Heart right ventricle (tissue), 16 donors: ENCODE measurements at regions of chr11 and their contacts with region 1.

Region 1: GRCh38 chr11:65988791-65989592 is 13.0 kb downstream of the EIF1AD start:
- DNase-seq: peak; percentile 56 to 93
- ATAC-seq: peak; percentile 96 to 99 (median 98)
- H3K4me3 ChIP-seq: no peak overlapping the region
- H3K27ac ChIP-seq: no peak overlapping the region
- H3K4me1 ChIP-seq: peaks cover 0 to 10% (median 0%) of the 10 kb centered on the region in 9 donors
- H3K27me3 ChIP-seq: no peaks in the 10 kb centered on the region
- CTCF ChIP-seq: peak; percentile 77 to 99 (median 91)

Region 2: GRCh38 chr11:65637794-65638317 is 351.1 kb before region 1 on chr11 and contains the start of gene SIPA1:
- intact Hi-C with region 1: loop called in 1 of 10 experiments (anchors 10 kb)
- DNase-seq: peak; percentile 83 to 85
- ATAC-seq: peak; percentile 79 to 87 (median 82)
- H3K4me3 ChIP-seq: peak within 1 kb of the TSS; percentile 74 to 90 (median 82)
- H3K27ac ChIP-seq: peak within 1 kb of the TSS; percentile 94 to 99 (median 96)
- H3K4me1 ChIP-seq: peaks cover 21 to 56% (median 50%) of the 10 kb centered on the region in 9 donors
- H3K27me3 ChIP-seq: no peaks in the 10 kb centered on the region
- CTCF ChIP-seq: peak; percentile 13 to 68 (median 52)
- total RNA-seq, gene SIPA1: 11.8 to 39.7 (median 15.6) TPM

Region 3: GRCh38 chr11:65711785-65712632 is 277.0 kb before region 1 on chr11 and contains the start of gene KAT5:
- intact Hi-C with region 1: loop called in 3 of 10 experiments (anchors 5 kb)
- DNase-seq: peak; percentile 98
- ATAC-seq: peak; percentile 92 to 96 (median 95)
- H3K4me3 ChIP-seq: peak within 1 kb of the TSS; percentile 39 to 82 (median 68)
- H3K27ac ChIP-seq: peak within 1 kb of the TSS; percentile 84 to 100 (median 98)
- H3K4me1 ChIP-seq: peaks cover 0 to 31% (median 21%) of the 10 kb centered on the region in 9 donors
- H3K27me3 ChIP-seq: no peaks in the 10 kb centered on the region
- CTCF ChIP-seq: peak; percentile 94 to 99 (median 98)
- total RNA-seq, gene KAT5: 40.9 to 53.6 (median 44.0) TPM

Region 4: DNA sequence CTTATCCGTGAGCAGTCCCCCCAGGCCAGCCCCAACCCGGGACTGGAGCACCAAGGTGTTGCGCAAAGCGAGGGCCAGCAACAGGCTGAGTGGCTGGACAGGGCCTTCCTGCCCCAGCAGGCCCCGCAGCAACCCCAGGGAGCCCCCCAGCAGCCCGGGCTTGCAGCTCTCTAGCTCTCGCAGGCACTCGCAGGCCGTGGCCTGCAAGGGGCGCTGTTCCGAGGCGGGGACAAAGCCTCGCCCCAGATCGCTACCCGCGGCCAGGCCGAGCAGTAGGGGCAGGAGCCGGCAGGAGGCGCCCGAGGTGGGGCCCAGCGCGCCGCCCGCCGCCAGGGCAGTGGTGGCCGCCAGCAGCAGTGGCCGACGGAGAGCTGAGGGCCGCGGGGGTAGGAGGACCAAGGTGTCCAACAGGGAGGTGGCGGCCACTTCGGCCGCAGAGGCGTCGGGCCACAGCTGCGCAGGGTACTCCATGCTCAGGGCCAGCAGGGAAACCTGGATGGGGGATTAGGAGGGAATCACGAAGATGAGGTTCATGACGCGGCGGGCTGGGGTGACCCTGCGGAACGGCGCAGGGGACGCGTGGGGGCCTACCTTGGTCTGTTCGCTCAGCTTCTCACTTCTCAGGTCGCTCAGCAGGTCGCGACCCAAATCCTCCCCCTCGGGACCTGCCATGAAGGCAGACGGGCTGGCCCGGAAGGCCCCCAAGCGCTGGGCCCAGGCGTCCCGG is 209.0 kb before region 1 on chr11:
- intact Hi-C with region 1: loop called in 2 of 10 experiments (anchors 5 to 10 kb)
- DNase-seq: peak; percentile 69 to 82
- ATAC-seq: peak; percentile 81 to 92 (median 90)
- H3K4me3 ChIP-seq: peak overlapping the region; percentile 68 to 98 (median 92)
- H3K27ac ChIP-seq: peak overlapping the region in 9 of 10 donors; percentile 70 to 96 (median 82)
- H3K4me1 ChIP-seq: peaks cover 9 to 53% (median 16%) of the 10 kb centered on the region in 9 donors
- H3K27me3 ChIP-seq: peaks cover 0 to 11% (median 5%) of the 10 kb centered on the region in 7 donors
- CTCF ChIP-seq: peak; percentile 83 to 99 (median 95)

Region 5: GRCh38 chr11:65810046-65810868 is 178.7 kb before region 1 on chr11:
- intact Hi-C with region 1: no loop called
- DNase-seq: no peak
- ATAC-seq: peak in 3 of 8 donors; percentile 18 to 27 (median 23)
- H3K4me3 ChIP-seq: no peak overlapping the region
- H3K27ac ChIP-seq: no peak overlapping the region
- H3K4me1 ChIP-seq: peaks cover 0 to 23% (median 5%) of the 10 kb centered on the region in 9 donors
- H3K27me3 ChIP-seq: peaks cover 0 to 46% (median 18%) of the 10 kb centered on the region in 7 donors
- CTCF ChIP-seq: no peak

Region 6: DNA sequence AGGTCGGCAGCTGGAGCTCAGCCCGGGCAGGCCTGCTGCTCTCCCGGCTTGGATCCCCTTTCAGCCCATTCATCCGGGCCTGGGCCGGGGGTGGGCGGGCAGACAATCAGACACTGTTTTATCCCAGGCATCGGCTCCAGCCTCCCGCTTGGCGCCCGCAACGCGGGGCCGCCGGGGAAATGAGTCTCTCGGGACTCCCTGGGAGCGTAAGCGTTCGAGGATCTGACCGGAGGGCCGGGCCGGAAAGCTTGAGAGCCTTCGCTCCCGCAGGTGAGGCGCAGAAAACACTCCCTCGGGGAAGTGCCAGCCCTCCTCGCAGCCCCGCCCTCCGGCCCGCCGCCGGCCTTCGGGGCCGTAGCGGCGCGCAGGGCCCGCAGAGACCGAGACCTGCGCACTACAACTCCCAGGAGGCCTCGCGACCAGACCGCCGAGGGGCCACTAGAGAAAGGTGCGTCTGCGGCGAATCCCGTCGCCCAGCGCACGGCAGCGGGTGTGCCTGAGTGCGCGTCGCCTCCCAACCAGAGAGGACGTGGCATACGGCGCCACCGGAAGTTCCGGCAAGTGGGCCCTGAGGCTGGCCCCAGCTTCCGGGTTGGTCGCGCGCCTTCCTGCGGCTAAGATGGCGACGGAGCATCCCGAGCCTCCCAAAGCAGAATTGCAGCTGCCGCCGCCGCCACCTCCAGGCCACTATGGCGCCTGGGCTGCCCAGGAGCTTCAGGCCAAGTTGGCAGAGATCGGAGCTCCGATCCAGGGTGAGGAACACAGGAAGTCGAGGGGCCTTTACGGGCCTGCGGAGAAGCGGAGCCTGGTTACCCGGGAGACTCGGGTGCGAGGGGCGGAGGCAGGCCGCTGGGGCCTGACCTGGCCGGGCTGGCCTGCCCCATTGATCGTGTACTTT is 63.0 kb after region 1 on chr11 and contains the start of gene SF3B2:
- intact Hi-C with region 1: no loop called
- DNase-seq: peak; percentile 96 to 98
- ATAC-seq: peak; percentile 96 to 99 (median 98)
- H3K4me3 ChIP-seq: peak within 1 kb of the TSS; percentile 77 to 100 (median 97)
- H3K27ac ChIP-seq: peak within 1 kb of the TSS; percentile 51 to 97 (median 92)
- H3K4me1 ChIP-seq: peaks cover 7 to 53% (median 31%) of the 10 kb centered on the region in 9 donors
- H3K27me3 ChIP-seq: peaks cover 0 to 25% (median 17%) of the 10 kb centered on the region in 7 donors
- CTCF ChIP-seq: peak in 3 of 9 donors; percentile 10 to 17 (median 13)
- total RNA-seq, gene SF3B2: 62.0 to 89.8 (median 72.7) TPM

Region 7: DNA sequence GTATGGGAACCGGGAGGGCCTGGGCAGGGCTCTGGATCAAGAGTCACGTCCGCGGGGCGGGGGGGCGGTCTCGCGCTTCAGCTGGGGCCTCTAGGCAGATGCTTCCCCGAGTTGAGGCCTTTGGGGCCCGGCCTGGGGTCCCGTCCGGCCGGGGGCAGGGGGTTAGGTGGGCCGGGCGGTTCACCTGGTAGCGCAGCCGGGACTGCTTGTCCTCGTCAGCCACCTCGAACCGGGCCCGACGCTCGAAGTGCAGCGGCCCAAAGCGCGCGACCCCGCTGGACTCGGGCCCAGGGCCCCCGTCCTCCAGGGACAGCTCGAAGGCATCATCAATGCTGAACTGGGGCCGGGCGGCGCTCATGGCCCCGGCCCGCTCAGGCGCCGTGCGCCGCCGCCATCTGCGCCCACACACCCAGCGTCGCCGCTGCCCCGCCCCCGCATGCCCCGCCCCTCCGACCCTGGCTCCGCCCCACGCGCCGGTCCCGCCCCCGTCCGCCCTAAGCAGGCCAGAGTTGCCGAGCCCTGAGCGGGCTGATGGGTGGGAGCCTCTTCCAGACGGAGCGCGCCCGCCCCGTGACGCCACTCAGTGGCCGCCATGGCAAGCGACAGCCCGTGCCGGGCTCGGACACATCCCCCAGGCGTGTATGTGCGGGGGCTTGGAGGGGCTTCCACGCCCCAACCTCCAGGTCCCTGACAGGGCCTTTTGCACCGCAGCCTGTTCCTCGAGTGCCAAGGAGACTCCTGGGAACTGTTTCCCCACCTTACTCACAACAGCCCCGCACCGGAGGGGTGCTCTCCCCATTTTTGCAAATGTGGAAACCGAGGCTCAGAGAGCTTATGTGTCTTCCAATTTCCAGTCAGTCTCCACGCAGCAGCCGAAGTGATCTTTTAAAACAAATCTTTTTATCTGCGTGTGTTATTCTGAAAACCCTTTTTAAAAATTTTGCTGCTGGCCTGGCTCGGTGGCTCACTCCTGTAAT is 1480.1 kb after region 1 on chr11 and contains the start of gene TMEM134:
- intact Hi-C with region 1: loop called in 1 of 10 experiments (anchors 5 kb)
- DNase-seq: peak; percentile 92 to 94
- ATAC-seq: peak; percentile 92 to 96 (median 94)
- H3K4me3 ChIP-seq: peak within 1 kb of the TSS; percentile 67 to 99 (median 84)
- H3K27ac ChIP-seq: peak within 1 kb of the TSS; percentile 44 to 94 (median 89)
- H3K4me1 ChIP-seq: peaks cover 4 to 47% (median 22%) of the 10 kb centered on the region in 9 donors
- H3K27me3 ChIP-seq: no peaks in the 10 kb centered on the region
- CTCF ChIP-seq: peak in 8 of 9 donors; percentile 44 to 73 (median 56)
- total RNA-seq, gene TMEM134: 69.8 to 104 (median 81.2) TPM